Transverse colon (tissue), 4 donors: ENCODE measurements at regions of chr3 and their contacts with region 1.

Region 1: GRCh38 chr3:11060500-11061251 is 68.1 kb downstream of the SLC6A1 start:
- DNase-seq: peak; percentile 63
- H3K4me3 ChIP-seq: no peak overlapping the region
- H3K27ac ChIP-seq: no peak overlapping the region
- H3K4me1 ChIP-seq: peaks cover 3 to 10% (median 6%) of the 10 kb centered on the region in 4 donors
- H3K27me3 ChIP-seq: peaks cover 18% of the 10 kb centered on the region
- CTCF ChIP-seq: peak; percentile 83 to 90 (median 88)
- EP300 ChIP-seq: no peak
- POLR2A ChIP-seq: no peak

Region 2: DNA sequence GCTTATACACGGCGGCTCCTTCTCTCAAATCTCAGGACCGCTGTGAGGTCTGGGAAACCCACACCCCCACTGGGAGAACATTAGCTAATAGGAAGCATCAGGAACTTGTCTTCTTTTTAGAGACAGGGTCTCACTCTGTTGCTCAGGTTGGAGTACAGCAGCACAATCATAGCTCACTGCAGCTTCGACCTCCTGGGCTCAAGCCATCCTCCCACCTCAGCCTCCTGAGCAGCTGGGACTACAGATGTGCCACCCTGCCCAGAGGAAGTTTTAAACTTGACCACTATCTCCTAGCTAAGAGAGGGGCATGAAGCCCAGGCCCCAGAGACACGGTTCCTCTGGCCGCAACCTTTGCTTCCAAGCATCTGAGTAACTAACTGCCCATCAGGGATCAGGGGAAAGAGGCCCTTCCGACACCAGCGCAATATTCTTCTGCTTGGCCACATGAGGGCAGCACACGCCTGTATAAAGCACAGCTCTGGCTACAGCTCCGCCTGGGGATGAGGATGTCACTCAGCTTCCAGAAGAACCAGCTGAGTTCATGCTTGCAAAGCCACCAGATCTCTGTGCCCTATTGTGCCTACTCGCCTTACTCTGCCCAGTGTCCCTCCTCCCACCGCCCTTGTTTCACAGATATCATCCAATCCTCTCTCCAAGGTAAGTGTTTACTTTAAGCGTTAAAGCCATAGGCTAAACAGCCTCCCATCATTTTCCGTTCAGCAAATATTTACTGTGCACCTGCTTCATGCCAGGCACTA is 302.2 kb before region 1 on chr3:
- in situ Hi-C with region 1: loop called in 2 of 4 experiments (anchors 25 kb)
- intact Hi-C with region 1: no loop called
- DNase-seq: peak; percentile 29
- H3K4me3 ChIP-seq: no peak overlapping the region
- H3K27ac ChIP-seq: no peak overlapping the region
- H3K4me1 ChIP-seq: no peaks in the 10 kb centered on the region
- H3K27me3 ChIP-seq: peaks cover 12% of the 10 kb centered on the region
- CTCF ChIP-seq: peak; percentile 53 to 63 (median 58)
- EP300 ChIP-seq: no peak
- POLR2A ChIP-seq: no peak

Region 3: GRCh38 chr3:10945683-10946287 is 114.9 kb before region 1 on chr3:
- in situ Hi-C with region 1: loop called (anchors 10 kb)
- intact Hi-C with region 1: loop called (anchors 5 kb)
- DNase-seq: peak; percentile 39
- H3K4me3 ChIP-seq: no peak overlapping the region
- H3K27ac ChIP-seq: no peak overlapping the region
- H3K4me1 ChIP-seq: no peaks in the 10 kb centered on the region
- H3K27me3 ChIP-seq: peaks cover 12% of the 10 kb centered on the region
- CTCF ChIP-seq: peak; percentile 62 to 85 (median 81)
- EP300 ChIP-seq: no peak
- POLR2A ChIP-seq: no peak

Region 4: DNA sequence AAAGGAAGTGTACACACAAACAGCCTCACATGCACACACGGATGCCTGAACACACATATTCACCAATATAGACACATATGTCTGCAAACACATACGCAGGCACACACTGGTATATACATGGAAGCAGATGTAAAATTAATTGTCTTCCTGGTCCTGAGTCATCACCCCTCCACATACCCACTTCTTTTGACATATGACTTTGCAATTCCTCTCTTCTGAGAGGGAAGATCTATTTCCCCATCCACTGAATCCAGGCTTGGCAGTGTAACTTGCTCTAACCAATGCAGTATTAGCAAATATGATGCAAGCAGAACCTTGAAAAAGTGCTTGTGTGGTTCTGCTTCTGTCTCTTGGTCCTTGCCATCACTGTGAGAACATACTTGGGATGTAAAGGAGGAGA is 16.8 kb after region 1 on chr3:
- in situ Hi-C with region 1: no loop called
- intact Hi-C with region 1: no loop called
- DNase-seq: no peak
- H3K4me3 ChIP-seq: no peak overlapping the region
- H3K27ac ChIP-seq: no peak overlapping the region
- H3K4me1 ChIP-seq: no peaks in the 10 kb centered on the region
- H3K27me3 ChIP-seq: no peaks in the 10 kb centered on the region
- CTCF ChIP-seq: no peak
- EP300 ChIP-seq: no peak
- POLR2A ChIP-seq: no peak

Region 5: GRCh38 chr3:11271986-11272904 is 211.6 kb after region 1 on chr3 and contains the start of gene ATG7:
- in situ Hi-C with region 1: no loop called
- intact Hi-C with region 1: no loop called
- DNase-seq: peak; percentile 98
- H3K4me3 ChIP-seq: peak within 1 kb of the TSS; percentile 69 to 99 (median 92)
- H3K27ac ChIP-seq: peak within 1 kb of the TSS; percentile 72 to 97 (median 90)
- H3K4me1 ChIP-seq: peaks cover 7 to 19% (median 9%) of the 10 kb centered on the region in 4 donors
- H3K27me3 ChIP-seq: no peaks in the 10 kb centered on the region
- CTCF ChIP-seq: peak in 3 of 5 experiments; percentile 7 to 54 (median 15)
- EP300 ChIP-seq: no peak
- POLR2A ChIP-seq: peak; percentile 95
- total RNA-seq, gene ATG7: 44.5 to 122 (median 75.0) TPM